BJ (cell line): ENCODE measurements at regions of chr17 and their contacts with region 1.

Region 1: GRCh38 chr17:27565874-27566670 is 64.9 kb upstream of the LGALS9 start:
- DNase-seq: no peak
- H3K4me3 ChIP-seq: no peak overlapping the region
- H3K27me3 ChIP-seq: no peaks in the 10 kb centered on the region
- CTCF ChIP-seq: no peak

Region 2: DNA sequence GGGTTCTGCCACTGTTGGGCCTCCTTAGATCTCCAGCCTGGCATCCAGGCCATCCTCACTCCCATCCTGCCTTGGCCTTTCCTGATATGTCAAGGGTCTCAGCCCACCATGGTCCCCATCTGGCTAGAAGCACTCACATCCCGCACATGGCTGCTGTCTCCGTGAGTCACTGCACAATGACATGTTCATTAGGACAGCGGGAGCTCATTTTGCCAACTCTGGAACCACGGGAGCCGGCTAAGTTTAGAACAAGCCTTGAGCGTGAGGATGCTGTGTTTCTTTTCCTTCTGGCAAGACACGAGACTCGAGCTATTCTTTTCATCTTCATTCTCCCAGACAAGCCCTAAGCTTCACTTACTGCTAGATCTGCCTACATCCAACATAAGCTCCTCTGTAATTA is 175.5 kb before region 1 on chr17:
- CTCF ChIA-PET with region 1: no interaction called
- POLR2A ChIA-PET with region 1: no interaction called
- DNase-seq: no peak
- H3K4me3 ChIP-seq: no peak overlapping the region
- H3K27me3 ChIP-seq: peaks cover 3% of the 10 kb centered on the region; the same call in 1 of the 2 replicates
- CTCF ChIP-seq: no peak

Region 3: DNA sequence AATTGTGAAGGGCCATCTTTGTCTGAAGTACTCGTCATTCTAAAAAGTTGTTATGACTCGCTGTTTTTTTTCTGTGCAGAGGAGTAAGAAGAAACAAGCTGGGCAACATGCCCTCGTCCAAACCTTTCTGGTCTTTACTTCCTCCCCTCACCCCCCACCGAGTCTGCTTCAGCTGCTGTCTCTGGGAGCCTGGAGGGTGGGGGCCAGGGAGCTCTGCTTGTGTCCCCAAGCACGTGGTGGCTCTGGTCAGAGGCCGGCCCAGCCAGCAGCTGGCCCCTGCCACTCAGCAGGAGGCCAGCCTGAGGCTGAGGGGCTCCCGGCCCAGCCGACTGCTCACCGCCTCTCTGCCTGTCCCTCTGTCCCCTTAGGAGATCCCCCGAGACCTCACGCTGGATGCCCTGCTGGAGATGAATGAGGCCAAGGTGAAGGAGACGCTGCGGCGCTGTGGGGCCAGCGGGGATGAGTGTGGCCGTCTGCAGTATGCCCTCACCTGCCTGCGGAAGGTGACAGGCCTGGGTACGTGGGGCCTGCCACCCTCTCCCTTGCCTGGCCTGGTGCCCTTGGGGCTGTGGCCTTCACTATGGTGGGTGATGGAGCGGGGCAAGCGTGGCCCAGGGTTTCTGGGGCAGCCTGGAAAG is 11.2 kb after region 1 on chr17:
- CTCF ChIA-PET with region 1: interaction called, 4 read pairs
- POLR2A ChIA-PET with region 1: interaction called, 11 read pairs
- DNase-seq: peak; percentile 26
- H3K4me3 ChIP-seq: no peak overlapping the region
- H3K27me3 ChIP-seq: no peaks in the 10 kb centered on the region
- CTCF ChIP-seq: no peak